ENCODE measurements at regions of chr7 and their contacts with region 1.

Region 1: GRCh38 chr7:5231811-5232484 is 41.9 kb downstream of the WIPI2 start:
- DNase-seq: peak; percentile 37
- ATAC-seq: peak; percentile 71

Region 2: DNA sequence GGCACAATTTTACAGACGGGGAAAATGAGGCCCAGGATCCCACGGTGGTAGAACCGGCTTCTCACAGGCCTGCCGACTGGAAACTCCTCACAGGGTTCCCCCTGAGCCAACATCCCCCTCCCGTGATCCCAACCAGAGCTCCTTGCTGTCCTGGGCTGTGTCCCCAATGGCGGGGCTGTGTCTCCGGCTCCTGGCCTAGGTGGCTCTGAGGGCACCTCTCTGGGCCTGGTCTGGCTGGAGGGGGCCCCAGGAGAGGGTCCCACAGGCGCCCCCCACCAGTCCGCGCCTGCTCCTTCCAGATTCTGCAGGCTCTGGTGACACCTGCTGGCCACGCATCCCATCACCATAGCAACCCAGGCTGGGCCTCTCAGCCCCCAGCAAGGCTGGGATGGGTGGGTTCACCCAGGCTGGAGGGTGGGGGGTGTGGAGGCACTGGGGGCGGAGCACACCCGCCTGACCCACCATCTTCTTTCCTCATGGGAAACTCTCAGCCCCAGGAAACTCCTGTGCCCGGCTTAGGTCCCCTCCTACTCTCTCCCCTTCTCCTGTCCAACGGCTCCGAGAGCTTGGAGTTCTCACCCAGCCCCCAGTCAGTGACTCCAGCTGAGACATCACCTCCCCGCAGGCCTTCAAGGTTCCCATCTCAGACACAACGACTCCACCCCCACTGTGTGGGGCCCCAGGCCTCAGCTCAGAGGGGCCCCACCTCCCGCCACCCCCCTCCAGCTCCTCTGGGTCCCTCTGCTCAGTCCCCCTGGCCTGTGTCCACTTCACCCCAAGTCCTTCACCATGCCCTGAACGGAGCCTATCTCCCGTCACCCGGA is 218.8 kb after region 1 on chr7:
- intact Hi-C with region 1: loop called (anchors 10 kb)
- DNase-seq: peak; percentile 74
- ATAC-seq: peak; percentile 86